Testis (tissue), 5 donors: ENCODE measurements at regions of chr4 and their contacts with region 1.

Region 1: GRCh38 chr4:165464813-165465381 is 86.1 kb downstream of the CPE start:
- DNase-seq: peak; percentile 43
- H3K4me3 ChIP-seq: no peak overlapping the region
- H3K27ac ChIP-seq: no peak overlapping the region
- H3K4me1 ChIP-seq: peaks cover 4% of the 10 kb centered on the region
- H3K27me3 ChIP-seq: no peaks in the 10 kb centered on the region
- CTCF ChIP-seq: peak; percentile 81 to 90 (median 81)
- POLR2A ChIP-seq: no peak

Region 2: GRCh38 chr4:165131247-165131832 is 333.6 kb before region 1 on chr4:
- intact Hi-C with region 1: loop called (anchors 5 kb)
- DNase-seq: peak; percentile 86
- H3K4me3 ChIP-seq: no peak overlapping the region
- H3K27ac ChIP-seq: no peak overlapping the region
- H3K4me1 ChIP-seq: no peaks in the 10 kb centered on the region
- H3K27me3 ChIP-seq: no peaks in the 10 kb centered on the region
- CTCF ChIP-seq: peak; percentile 87 to 95 (median 94)
- POLR2A ChIP-seq: no peak

Region 3: DNA sequence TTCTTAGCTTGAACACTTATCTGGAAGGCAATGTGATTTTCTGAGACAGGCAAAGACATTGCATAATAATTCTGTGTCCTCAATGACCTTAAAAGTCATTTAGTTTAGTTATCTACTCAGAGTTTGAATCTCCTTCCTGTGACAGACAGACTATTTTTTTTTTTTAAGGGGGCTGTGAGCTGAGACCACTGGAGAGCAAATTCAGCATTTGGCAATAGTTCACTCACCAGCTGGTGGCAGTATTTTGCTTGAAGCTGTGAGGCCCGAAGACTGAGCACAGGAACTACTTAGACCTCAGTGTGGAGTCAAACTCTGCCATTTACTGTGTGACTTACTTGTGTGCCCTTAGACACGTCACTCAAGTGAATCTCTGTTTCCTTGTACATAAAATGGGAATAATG is 109.0 kb before region 1 on chr4:
- intact Hi-C with region 1: loop called (anchors 10 kb)
- DNase-seq: peak; percentile 81
- H3K4me3 ChIP-seq: no peak overlapping the region
- H3K27ac ChIP-seq: no peak overlapping the region
- H3K4me1 ChIP-seq: no peaks in the 10 kb centered on the region
- H3K27me3 ChIP-seq: no peaks in the 10 kb centered on the region
- CTCF ChIP-seq: peak in 2 of 3 experiments; percentile 41 to 44
- POLR2A ChIP-seq: no peak

Region 4: GRCh38 chr4:165384598-165384997 is 80.3 kb before region 1 on chr4:
- intact Hi-C with region 1: no loop called
- DNase-seq: no peak
- H3K4me3 ChIP-seq: no peak overlapping the region
- H3K27ac ChIP-seq: peak overlapping the region; percentile 35 to 78
- H3K4me1 ChIP-seq: peaks cover 20% of the 10 kb centered on the region
- H3K27me3 ChIP-seq: no peaks in the 10 kb centered on the region
- CTCF ChIP-seq: no peak
- POLR2A ChIP-seq: no peak